ENCODE measurements at regions of chr6 and their contacts with region 1.

Region 1: DNA sequence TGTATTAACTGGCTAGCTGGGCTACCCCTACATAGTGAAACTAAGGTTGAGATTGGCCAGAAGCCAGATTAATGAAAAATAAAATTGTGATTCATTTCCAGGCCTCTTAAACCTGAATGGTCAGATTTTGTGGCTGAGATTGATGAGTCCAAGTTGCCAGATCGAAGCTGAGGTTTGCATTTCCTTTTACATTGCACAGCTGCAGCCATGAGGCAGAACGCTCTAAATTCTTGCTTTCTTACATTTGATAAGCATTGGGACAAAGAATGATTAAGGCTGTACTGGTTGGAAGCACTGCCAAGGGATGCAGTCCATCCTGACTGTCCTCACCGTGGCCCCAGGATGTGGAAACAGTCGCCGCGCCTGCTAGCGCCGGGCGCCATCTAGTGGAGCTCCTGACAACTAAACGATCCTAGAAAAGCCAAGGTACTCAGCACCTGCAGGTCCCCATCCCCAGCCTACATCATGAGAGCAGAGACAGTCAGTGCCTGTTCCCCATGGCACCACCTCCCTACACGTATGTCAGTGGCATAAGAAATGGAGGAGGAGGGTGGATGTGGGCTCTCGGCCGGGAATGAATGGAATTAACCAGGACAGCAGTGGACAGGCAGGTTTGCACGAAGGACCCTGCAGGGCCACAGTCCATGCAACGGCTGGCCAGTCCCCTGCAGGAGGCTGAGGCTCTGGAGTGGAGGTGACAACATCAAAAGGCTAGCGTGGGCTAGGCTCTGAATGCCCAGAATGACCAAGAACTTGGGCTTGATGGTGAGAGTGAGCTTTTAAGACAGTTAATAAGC is 19.0 kb downstream of the PXDC1 start:
- DNase-seq: peak; percentile 77
- ATAC-seq: peak; percentile 79 to 83

Region 2: DNA sequence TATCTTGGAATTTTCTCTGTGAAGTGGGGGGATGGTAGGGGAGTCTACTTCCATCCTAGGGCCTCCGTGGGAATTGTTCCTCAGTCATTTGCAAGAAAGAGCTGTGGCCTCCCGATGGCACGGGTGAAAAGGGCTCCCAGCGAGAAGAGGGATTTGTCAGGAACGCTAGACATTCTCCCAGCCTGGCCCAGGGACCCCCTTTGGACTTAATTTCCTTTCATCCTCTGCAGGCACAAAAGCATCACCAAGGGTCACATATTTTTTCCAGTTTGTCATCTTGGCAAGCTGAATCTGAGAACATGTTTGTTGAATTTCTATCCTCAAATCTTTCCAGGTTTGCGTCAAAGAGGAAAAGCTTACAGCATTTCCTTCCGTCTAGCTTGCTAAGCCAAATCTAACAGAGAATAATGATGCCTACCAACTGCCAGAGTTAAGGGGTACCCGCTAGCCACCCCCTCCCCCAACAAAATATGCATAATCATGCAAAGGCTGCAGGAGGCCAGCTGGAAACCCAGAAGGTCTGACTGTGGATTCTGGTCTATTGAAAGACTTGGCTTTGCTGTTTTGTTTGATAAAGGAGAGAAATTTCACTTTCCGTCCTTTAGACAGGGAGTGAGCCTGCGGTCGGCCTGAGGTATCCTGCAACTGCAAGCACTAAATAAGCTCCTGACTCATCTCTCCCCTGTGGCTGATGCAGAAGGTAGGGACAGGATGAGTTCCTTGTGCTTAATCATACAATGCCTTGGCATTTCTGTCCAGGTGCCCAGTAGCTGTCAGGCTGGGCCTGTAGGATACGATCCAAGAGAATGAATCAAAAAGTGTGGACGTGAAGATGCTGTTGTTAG is 450.7 kb before region 1 on chr6:
- intact Hi-C with region 1: loop called (anchors 1 to 5 kb)
- DNase-seq: no peak
- ATAC-seq: peak; percentile 32 to 81

Region 3: GRCh38 chr6:3410385-3411360 is 321.9 kb before region 1 on chr6:
- intact Hi-C with region 1: loop called in 1 of 2 experiments (anchors 5 kb)
- DNase-seq: peak; percentile 60
- ATAC-seq: peak in 1 of 2 donors; percentile 55

Region 4: DNA sequence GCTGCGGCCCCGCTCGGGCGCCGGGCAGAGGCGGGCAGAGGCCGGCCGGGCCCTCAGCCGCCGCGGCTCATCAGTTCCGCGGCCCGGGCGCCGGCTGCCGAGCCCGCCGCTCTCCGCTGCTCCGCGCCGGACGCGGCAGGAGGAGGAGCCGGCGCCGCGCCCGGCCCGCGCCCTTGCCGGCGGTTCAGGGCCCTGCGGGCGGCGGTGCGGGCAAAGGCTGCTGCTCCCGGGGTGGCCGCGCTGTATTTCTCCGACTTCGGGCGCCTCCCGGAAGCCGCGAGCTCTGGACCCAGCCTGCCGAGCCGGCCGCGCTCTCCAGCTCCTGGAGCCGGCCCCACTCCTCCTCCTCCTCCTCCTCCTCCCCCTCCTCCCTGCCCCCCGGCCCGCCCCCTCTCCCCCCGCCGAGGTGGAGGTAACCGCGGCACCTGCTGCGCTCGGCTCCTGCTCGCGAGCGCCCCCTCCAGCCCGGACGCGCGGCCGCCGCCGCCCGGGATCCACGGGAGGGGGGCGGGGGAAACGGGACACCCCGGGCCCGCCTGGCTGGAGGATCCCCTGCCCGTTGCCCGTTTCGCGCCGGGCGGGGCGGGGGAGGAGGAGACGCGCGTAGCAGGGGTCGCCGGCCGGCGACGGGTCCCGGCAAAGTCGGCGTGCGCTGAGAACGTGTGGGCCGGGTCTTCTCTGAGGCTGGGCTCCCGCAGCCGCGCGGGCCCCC is 275.6 kb before region 1 on chr6 and contains the start of gene SLC22A23:
- intact Hi-C with region 1: loop called in 1 of 2 experiments (anchors 10 kb)
- DNase-seq: peak; percentile 60
- ATAC-seq: peak; percentile 85 to 89
- total RNA-seq, gene SLC22A23: 4.3 to 5.5 TPM

Region 5: GRCh38 chr6:3697609-3698008 is 34.9 kb before region 1 on chr6:
- intact Hi-C with region 1: no loop called
- DNase-seq: no peak
- ATAC-seq: peak; percentile 71 to 95

Region 6: DNA sequence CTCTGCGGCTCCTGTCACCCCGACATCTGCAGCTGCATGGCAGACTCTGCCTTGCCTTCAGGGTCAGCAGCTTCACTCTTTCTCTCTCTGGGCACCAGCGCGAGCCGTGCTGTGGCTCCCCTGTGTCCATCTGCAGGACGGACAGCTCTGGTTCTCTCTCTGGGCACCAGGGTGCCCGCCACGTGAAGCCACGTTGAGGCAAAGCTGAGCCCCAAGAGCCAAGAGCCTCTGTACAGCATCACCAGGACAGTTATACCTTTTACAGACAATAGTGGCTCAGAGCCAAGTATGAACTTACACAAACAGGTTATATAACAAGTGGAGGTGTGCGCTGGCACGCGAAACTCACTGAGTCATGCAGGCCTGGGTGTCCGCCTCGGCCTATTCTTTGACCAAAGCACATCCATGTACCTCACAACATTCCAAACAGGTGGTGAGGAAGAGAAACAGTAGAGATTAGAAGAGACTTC is 167.5 kb after region 1 on chr6:
- intact Hi-C with region 1: no loop called
- DNase-seq: no peak
- ATAC-seq: no peak

Region 7: DNA sequence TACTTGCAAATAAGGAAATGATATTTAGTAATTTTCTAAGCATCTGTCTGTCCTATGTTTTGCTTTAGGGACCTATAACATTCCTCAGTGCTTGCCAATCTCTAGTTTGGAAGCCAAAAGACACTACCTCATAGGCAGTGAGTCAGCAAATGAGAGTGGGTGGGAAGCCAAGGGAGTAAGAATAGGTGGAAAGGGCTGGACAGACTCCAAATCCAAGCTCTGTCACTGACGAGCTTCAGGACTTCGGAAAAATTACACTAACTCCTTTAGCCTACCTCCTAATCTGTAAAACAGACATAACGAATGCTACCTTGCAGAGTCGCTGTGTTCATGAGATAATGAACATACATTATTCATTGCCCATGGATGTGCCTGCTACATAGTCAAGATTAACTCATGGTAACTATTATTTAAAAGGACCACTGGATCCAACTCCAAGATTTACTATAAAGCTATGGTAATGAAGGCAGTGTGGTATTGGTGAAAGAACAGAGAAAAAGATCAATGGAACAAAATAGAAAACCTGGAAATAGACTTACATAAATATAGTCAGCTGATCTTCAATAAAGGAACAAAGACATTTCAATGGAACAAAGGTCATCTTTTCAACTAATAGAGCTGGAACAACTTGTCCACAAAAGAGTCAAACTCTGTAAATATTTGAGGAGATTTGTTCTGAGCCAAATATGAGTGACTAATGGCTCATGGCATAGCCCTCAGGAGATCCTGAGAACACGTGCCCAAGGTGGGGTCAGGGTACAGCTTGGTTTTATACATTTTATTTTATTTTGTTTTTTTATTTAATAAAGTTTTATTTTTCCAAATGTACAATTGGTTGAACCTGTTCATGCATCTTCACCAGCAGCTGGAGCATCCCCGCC is 180.8 kb after region 1 on chr6:
- intact Hi-C with region 1: no loop called
- DNase-seq: peak; percentile 76
- ATAC-seq: peak; percentile 88 to 93